Transverse colon (tissue), 4 donors: ENCODE measurements at regions of chr11 and their contacts with region 1.

Region 1: GRCh38 chr11:32884770-32885384 is 7.7 kb upstream of the QSER1 start:
- DNase-seq: no peak
- H3K4me3 ChIP-seq: no peak overlapping the region
- H3K27ac ChIP-seq: no peak overlapping the region
- H3K4me1 ChIP-seq: no peaks in the 10 kb centered on the region
- H3K27me3 ChIP-seq: no peaks in the 10 kb centered on the region
- CTCF ChIP-seq: peak; percentile 16 to 46 (median 25)
- EP300 ChIP-seq: no peak
- POLR2A ChIP-seq: no peak

Region 2: GRCh38 chr11:32821517-32821916 is 63.4 kb before region 1 on chr11:
- in situ Hi-C with region 1: no loop called
- intact Hi-C with region 1: no loop called
- DNase-seq: no peak
- H3K4me3 ChIP-seq: no peak overlapping the region
- H3K27ac ChIP-seq: no peak overlapping the region
- H3K4me1 ChIP-seq: no peaks in the 10 kb centered on the region
- H3K27me3 ChIP-seq: no peaks in the 10 kb centered on the region
- CTCF ChIP-seq: no peak
- EP300 ChIP-seq: no peak
- POLR2A ChIP-seq: no peak

Region 3: GRCh38 chr11:33438301-33438700 is 553.4 kb after region 1 on chr11:
- in situ Hi-C with region 1: no loop called
- intact Hi-C with region 1: loop called (anchors 5 kb)
- DNase-seq: no peak
- H3K4me3 ChIP-seq: no peak overlapping the region
- H3K27ac ChIP-seq: no peak overlapping the region
- H3K4me1 ChIP-seq: no peaks in the 10 kb centered on the region
- H3K27me3 ChIP-seq: no peaks in the 10 kb centered on the region
- CTCF ChIP-seq: no peak
- EP300 ChIP-seq: no peak
- POLR2A ChIP-seq: no peak